GM23248 (cell line): ENCODE measurements at regions of chr1 and their contacts with region 1.

Region 1: DNA sequence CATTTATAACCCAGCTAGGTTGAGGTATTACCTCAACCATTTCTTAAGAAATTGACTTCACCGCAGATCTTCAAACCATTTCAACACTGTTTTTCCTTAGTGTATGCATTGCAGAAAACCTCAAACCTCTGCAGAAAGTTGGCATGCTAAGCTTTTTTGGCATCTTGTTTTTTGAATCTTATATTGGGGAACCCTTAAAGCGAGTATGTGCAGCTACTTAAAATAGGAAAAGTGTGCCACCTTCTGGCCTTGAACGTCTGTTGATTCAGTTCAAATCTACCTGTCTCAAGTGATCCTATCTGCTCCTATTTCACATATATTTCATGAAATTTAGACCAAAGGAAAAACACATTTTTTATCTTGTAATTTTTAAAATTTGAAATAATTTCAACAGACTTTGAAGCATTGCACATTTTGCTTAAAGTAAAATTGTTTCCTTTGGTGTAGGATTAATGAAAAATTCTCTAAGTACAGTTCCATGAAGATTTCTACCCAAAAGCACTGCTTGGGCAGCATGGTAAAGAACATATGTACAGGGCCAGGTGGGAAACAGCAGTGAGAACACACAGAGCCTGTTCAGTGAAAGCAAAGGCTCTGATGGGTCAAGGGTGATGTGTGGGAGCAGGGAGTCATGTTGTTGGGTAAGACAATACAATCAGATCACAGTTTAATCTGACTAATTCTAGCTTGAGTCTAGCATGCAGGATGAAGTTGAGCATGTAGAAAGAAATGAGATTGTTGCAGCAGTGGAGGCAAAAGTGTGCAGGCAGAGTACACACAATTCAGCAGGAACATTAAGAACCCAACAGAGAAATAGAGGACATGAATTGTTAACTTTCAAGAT is 17.2 kb downstream of the HENMT1 start:
- DNase-seq: peak; percentile 80
- H3K4me3 ChIP-seq: no peak overlapping the region
- H3K27ac ChIP-seq: no peak overlapping the region
- H3K4me1 ChIP-seq: peaks cover 8% of the 10 kb centered on the region
- H3K27me3 ChIP-seq: no peaks in the 10 kb centered on the region

Region 2: DNA sequence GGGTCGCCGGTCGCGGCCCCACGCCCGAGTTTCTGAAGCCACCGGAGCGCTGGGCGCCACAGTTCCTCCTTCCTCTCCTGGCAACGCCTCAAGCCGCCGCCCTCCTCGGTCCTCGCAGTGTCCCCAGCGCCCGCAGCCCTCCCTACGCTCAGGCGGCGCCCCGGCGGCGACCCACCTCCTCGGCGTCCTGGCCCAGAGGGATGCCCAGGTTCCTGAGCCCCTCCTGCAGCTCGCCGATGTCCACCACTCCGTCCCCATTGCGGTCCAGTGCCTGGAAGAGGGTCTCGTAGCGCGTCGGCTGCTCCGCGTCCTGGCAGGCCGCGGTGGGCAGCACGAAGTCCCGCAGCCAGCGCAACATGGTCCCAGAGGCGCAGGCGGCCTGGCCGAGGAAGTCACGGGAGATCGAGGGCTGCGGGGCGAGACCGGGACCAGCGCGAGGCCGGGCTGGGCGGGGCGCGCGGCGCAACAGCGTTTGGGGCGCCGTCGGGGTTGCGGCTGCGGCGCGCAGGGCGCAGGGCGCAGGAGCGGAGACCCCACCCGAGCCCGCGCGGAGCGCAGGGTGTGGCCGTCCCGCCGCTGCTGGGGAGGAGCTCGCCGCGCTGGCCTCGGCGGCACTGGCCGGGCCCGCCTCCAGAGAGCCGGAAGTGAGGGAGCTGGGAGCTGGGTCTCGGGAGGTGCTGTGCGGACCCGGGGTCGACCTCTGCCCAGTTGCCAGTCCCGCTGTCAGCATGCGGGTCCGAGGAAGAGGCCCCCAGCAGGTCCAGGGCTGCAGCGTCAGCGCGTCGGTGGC is 443.7 kb before region 1 on chr1 and contains the start of gene SLC25A24:
- in situ Hi-C with region 1: loop called (anchors 10 kb)
- DNase-seq: peak; percentile 90
- H3K4me3 ChIP-seq: peak within 1 kb of the TSS; percentile 94
- H3K27ac ChIP-seq: peak within 1 kb of the TSS; percentile 77
- H3K4me1 ChIP-seq: peaks cover 10% of the 10 kb centered on the region
- H3K27me3 ChIP-seq: no peaks in the 10 kb centered on the region
- total RNA-seq, gene SLC25A24: 41.5 and 47.7 TPM in 2 replicates

Region 3: GRCh38 chr1:108512239-108512981 is 131.3 kb before region 1 on chr1:
- in situ Hi-C with region 1: loop called (anchors 5 kb)
- DNase-seq: peak; percentile 69
- H3K4me3 ChIP-seq: no peak overlapping the region
- H3K27ac ChIP-seq: no peak overlapping the region
- H3K4me1 ChIP-seq: no peaks in the 10 kb centered on the region
- H3K27me3 ChIP-seq: no peaks in the 10 kb centered on the region

Region 4: DNA sequence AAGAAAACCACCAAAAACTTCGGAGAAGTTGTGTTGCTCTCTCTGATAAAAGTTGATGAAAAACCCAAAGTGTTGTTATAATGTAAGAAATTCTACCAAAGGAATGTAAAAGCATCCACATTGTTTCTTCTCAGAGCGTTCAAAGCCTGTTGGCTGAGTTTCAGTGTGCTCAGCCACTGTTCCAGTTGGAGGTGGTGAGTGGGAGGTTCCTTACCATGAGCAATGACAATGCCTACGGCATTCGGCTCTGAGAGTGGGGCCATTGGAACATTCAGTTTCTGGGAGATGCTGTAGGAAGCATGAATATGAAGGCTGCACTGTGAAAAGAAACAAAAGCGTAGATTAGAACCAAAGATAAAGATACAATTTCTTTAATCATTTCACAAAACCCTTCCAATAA is 683.6 kb after region 1 on chr1:
- in situ Hi-C with region 1: no loop called
- DNase-seq: peak; percentile 35
- H3K4me3 ChIP-seq: no peak overlapping the region
- H3K27ac ChIP-seq: no peak overlapping the region
- H3K4me1 ChIP-seq: no peaks in the 10 kb centered on the region
- H3K27me3 ChIP-seq: no peaks in the 10 kb centered on the region